ENCODE measurements at regions of chr10 and their contacts with region 1.

Region 1: GRCh38 chr10:97025613-97026242 is 160.0 kb downstream of the SLIT1 start:
- DNase-seq: no peak
- ATAC-seq: peak; percentile 71
- H3K4me3 Mint-ChIP-seq: no peak overlapping the region
- H3K27ac Mint-ChIP-seq: no peak overlapping the region
- H3K4me1 Mint-ChIP-seq: peaks cover 15% of the 10 kb centered on the region
- H3K27me3 Mint-ChIP-seq: peaks cover 3% of the 10 kb centered on the region
- CTCF ChIP-seq: peak; percentile 7

Region 2: GRCh38 chr10:96395931-96396877 is 629.5 kb before region 1 on chr10:
- CTCF ChIA-PET with region 1: interaction called, 6 read pairs
- POLR2A ChIA-PET with region 1: no interaction called
- intact Hi-C with region 1: loop called (anchors 1 kb)
- DNase-seq: peak; percentile 42
- ATAC-seq: peak; percentile 79
- H3K4me3 Mint-ChIP-seq: no peak overlapping the region
- H3K27ac Mint-ChIP-seq: no peak overlapping the region
- H3K4me1 Mint-ChIP-seq: peaks cover 5% of the 10 kb centered on the region
- H3K27me3 Mint-ChIP-seq: peaks cover 24% of the 10 kb centered on the region
- CTCF ChIP-seq: peak; percentile 90

Region 3: GRCh38 chr10:96491299-96491698 is 534.4 kb before region 1 on chr10:
- CTCF ChIA-PET with region 1: interaction called, 11 read pairs
- POLR2A ChIA-PET with region 1: no interaction called
- intact Hi-C with region 1: no loop called
- DNase-seq: no peak
- ATAC-seq: no peak
- H3K4me3 Mint-ChIP-seq: no peak overlapping the region
- H3K27ac Mint-ChIP-seq: no peak overlapping the region
- H3K4me1 Mint-ChIP-seq: no peaks in the 10 kb centered on the region
- H3K27me3 Mint-ChIP-seq: peaks cover 8% of the 10 kb centered on the region
- CTCF ChIP-seq: no peak

Region 4: GRCh38 chr10:96642973-96643372 is 382.8 kb before region 1 on chr10:
- CTCF ChIA-PET with region 1: interaction called, 10 read pairs
- POLR2A ChIA-PET with region 1: no interaction called
- intact Hi-C with region 1: loop called (anchors 1 kb)
- DNase-seq: peak; percentile 54
- ATAC-seq: no peak
- H3K4me3 Mint-ChIP-seq: no peak overlapping the region
- H3K27ac Mint-ChIP-seq: peak overlapping the region; percentile 56
- H3K4me1 Mint-ChIP-seq: peaks cover 58% of the 10 kb centered on the region
- H3K27me3 Mint-ChIP-seq: no peaks in the 10 kb centered on the region
- CTCF ChIP-seq: no peak

Region 5: DNA sequence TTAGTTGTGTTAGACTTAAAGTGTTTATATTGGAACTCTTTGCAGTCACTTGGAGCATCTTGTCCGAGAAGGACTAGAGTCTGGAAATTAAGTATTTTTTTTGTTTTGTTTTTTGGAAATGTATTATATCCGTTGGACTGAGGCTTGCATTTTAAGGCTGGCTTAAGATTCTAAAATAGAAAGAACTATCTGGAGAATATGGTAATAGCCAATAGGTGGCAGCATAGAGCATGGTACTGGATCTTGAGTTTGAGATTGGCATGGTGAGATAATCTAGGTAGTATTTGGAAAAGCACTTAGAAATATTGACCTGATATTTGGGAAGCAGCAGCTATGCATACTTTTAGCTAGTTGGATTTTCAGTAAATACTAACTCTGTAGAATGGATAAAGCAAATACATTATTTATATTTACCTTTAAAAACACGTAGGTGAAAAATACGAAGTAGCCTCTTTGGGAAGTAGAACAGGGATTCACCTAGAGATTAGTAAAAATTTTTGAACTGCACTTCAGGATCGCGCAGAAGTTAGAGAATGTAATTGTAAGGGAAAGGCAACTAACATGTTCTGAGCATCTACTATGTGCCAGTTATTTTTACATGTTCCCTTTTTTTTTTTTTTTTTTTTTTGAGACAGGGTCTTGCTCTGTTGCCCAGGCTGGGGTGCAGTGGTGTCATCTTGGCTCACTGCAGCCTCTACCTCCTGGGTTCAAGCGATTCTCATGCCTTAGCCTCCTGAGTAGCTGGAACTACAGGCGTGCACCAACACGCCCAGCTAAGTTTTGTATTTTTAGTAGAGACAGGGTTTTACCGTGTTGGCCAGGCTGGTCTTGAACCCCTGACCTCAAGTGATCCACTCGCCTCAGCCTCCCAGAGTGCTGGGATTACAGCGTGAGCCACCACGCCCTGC is 115.0 kb before region 1 on chr10:
- CTCF ChIA-PET with region 1: interaction called, 32 read pairs
- POLR2A ChIA-PET with region 1: no interaction called
- intact Hi-C with region 1: loop called (anchors 1 kb)
- DNase-seq: no peak
- ATAC-seq: peak; percentile 60
- H3K4me3 Mint-ChIP-seq: no peak overlapping the region
- H3K27ac Mint-ChIP-seq: no peak overlapping the region
- H3K4me1 Mint-ChIP-seq: peaks cover 15% of the 10 kb centered on the region
- H3K27me3 Mint-ChIP-seq: no peaks in the 10 kb centered on the region
- CTCF ChIP-seq: peak; percentile 28

Region 6: GRCh38 chr10:97037365-97038361 is 11.9 kb after region 1 on chr10:
- CTCF ChIA-PET with region 1: interaction called, 27 read pairs
- POLR2A ChIA-PET with region 1: interaction called, 4 read pairs
- intact Hi-C with region 1: no loop called
- DNase-seq: peak; percentile 63
- ATAC-seq: peak; percentile 96
- H3K4me3 Mint-ChIP-seq: peak overlapping the region; percentile 83
- H3K27ac Mint-ChIP-seq: peak overlapping the region; percentile 41
- H3K4me1 Mint-ChIP-seq: peaks cover 12% of the 10 kb centered on the region
- H3K27me3 Mint-ChIP-seq: peaks cover 17% of the 10 kb centered on the region
- CTCF ChIP-seq: peak; percentile 91

Region 7: GRCh38 chr10:97128039-97128492 is 102.3 kb after region 1 on chr10:
- CTCF ChIA-PET with region 1: no interaction called
- POLR2A ChIA-PET with region 1: no interaction called
- intact Hi-C with region 1: no loop called
- DNase-seq: no peak
- ATAC-seq: no peak
- H3K4me3 Mint-ChIP-seq: no peak overlapping the region
- H3K27ac Mint-ChIP-seq: no peak overlapping the region
- H3K4me1 Mint-ChIP-seq: no peaks in the 10 kb centered on the region
- H3K27me3 Mint-ChIP-seq: peaks cover 14% of the 10 kb centered on the region
- CTCF ChIP-seq: no peak

Region 8: DNA sequence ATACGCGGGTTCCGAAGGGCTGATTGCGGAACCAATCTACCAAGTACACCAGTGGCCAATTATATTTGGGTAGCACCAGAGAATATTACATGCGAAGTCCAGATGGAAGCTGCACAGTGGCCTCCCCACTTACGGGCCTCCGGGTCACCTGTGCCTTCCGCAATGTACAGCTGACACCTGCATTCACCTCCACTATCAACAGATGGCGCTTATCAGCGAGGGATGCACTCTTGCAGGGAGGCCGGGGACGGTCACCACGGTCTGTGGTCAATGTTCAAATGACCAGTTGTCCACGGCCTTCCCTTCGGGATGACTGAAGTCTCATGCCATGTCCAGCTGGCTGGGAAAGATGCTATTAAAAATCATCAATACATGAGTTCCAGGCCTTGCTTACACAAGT is 112.4 kb after region 1 on chr10:
- CTCF ChIA-PET with region 1: no interaction called
- POLR2A ChIA-PET with region 1: no interaction called
- intact Hi-C with region 1: no loop called
- DNase-seq: no peak
- ATAC-seq: no peak
- H3K4me3 Mint-ChIP-seq: no peak overlapping the region
- H3K27ac Mint-ChIP-seq: no peak overlapping the region
- H3K4me1 Mint-ChIP-seq: no peaks in the 10 kb centered on the region
- H3K27me3 Mint-ChIP-seq: peaks cover 26% of the 10 kb centered on the region
- CTCF ChIP-seq: no peak